Dorsolateral prefrontal cortex (tissue), 120 donors: ENCODE measurements at regions of chr18 and their contacts with region 1.

Region 1: GRCh38 chr18:56043671-56044070 is 455.7 kb upstream of the TCF4 start:
- DNase-seq: peak; percentile 24 to 98 (median 90)
- H3K4me3 ChIP-seq: peak overlapping the region in 6 of 59 donors; percentile 2 to 33 (median 20)
- H3K27ac ChIP-seq: peak overlapping the region; percentile 66 to 98 (median 94)
- H3K27me3 ChIP-seq: no peaks in the 10 kb centered on the region
- CTCF ChIP-seq: peak in 4 of 56 donors; percentile 6 to 10 (median 6)

Region 2: GRCh38 chr18:55136258-55136657 is 907.4 kb before region 1 on chr18:
- intact Hi-C with region 1: no loop called
- DNase-seq: no peak
- H3K4me3 ChIP-seq: no peak overlapping the region
- H3K27ac ChIP-seq: no peak overlapping the region
- H3K27me3 ChIP-seq: no peaks in the 10 kb centered on the region
- CTCF ChIP-seq: no peak

Region 3: GRCh38 chr18:55861266-55861665 is 182.4 kb before region 1 on chr18:
- intact Hi-C with region 1: loop called (anchors 5 kb)
- DNase-seq: peak in 5 of 10 donors; percentile 13 to 76 (median 58)
- H3K4me3 ChIP-seq: peak overlapping the region in 2 of 59 donors; percentile 11 to 14
- H3K27ac ChIP-seq: peak overlapping the region in 52 of 59 donors; percentile 3 to 85 (median 74)
- H3K27me3 ChIP-seq: no peaks in the 10 kb centered on the region
- CTCF ChIP-seq: peak; percentile 31 to 71 (median 57)

Region 4: DNA sequence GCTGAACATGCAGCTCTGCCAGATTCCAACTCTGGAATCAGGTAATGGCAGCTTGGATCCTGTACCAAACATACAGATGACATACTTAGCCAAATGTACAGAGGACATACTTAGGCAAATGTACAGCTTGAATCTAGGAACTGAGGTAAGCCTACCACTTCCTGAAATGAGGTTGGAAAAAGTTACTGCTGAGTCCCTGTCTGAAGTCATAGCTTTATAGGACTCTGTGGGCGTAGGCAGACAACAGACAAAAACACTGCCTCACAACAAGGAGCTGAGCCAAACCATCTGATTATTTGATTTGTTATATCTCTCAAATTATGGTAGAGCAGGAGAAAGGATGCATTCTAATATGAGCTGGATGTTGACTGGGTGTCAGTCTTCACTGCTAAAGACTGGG is 165.4 kb before region 1 on chr18:
- intact Hi-C with region 1: loop called in 1 of 2 experiments (anchors 1 kb)
- DNase-seq: no peak
- H3K4me3 ChIP-seq: no peak overlapping the region
- H3K27ac ChIP-seq: peak overlapping the region in 1 of 59 donors; percentile 25
- H3K27me3 ChIP-seq: no peaks in the 10 kb centered on the region
- CTCF ChIP-seq: no peak

Region 5: GRCh38 chr18:55998071-55998522 is 45.6 kb before region 1 on chr18:
- intact Hi-C with region 1: loop called (anchors 2 kb)
- DNase-seq: peak; percentile 8 to 86 (median 73)
- H3K4me3 ChIP-seq: peak overlapping the region in 56 of 59 donors; percentile 8 to 65 (median 38)
- H3K27ac ChIP-seq: peak overlapping the region; percentile 25 to 97 (median 91)
- H3K27me3 ChIP-seq: no peaks in the 10 kb centered on the region
- CTCF ChIP-seq: peak in 13 of 56 donors; percentile 10 to 35 (median 23)

Region 6: GRCh38 chr18:56382541-56382940 is 338.9 kb after region 1 on chr18:
- intact Hi-C with region 1: loop called in 1 of 2 experiments (anchors 10 kb)
- DNase-seq: peak; percentile 5 to 73 (median 50)
- H3K4me3 ChIP-seq: peak overlapping the region in 22 of 59 donors; percentile 0 to 51 (median 21)
- H3K27ac ChIP-seq: peak overlapping the region in 30 of 59 donors; percentile 2 to 80 (median 36)
- H3K27me3 ChIP-seq: no peaks in the 10 kb centered on the region
- CTCF ChIP-seq: peak in 8 of 56 donors; percentile 13 to 34 (median 28)